CD4-positive, alpha-beta memory T cell (primary cell): ENCODE measurements at regions of chr10 and their contacts with region 1.

Region 1: GRCh38 chr10:3785257-3785850 is 345 bp upstream of the KLF6 start:
- DNase-seq: peak; percentile 99 to 100 (median 100)
- H3K4me3 ChIP-seq: peak overlapping the region; percentile 75 to 95
- H3K4me3 Mint-ChIP-seq: peak overlapping the region; percentile 90 to 99 (median 96)
- H3K27ac ChIP-seq: peak overlapping the region; percentile 97
- H3K27ac Mint-ChIP-seq: peak overlapping the region; percentile 98 to 100 (median 98)
- H3K4me1 ChIP-seq: peaks cover 23% of the 10 kb centered on the region
- H3K4me1 Mint-ChIP-seq: peaks cover 8 to 55% (median 24%) of the 10 kb centered on the region in 4 donors
- H3K27me3 ChIP-seq: no peaks in the 10 kb centered on the region
- H3K27me3 Mint-ChIP-seq: peaks cover 0 to 2% of the 10 kb centered on the region in 2 donors

Region 2: GRCh38 chr10:3472287-3473051 is 312.9 kb before region 1 on chr10:
- CTCF ChIA-PET with region 1: interaction called, 4 read pairs
- POLR2A ChIA-PET with region 1: interaction called, 12 read pairs
- intact Hi-C with region 1: no loop called
- DNase-seq: peak in 3 of 5 donors; percentile 9 to 13 (median 12)
- H3K4me3 ChIP-seq: peak overlapping the region; percentile 10 to 58
- H3K4me3 Mint-ChIP-seq: peak overlapping the region; percentile 86 to 93 (median 90)
- H3K27ac ChIP-seq: peak overlapping the region; percentile 29
- H3K27ac Mint-ChIP-seq: peak overlapping the region; percentile 62 to 94 (median 92)
- H3K4me1 ChIP-seq: peaks cover 40% of the 10 kb centered on the region
- H3K4me1 Mint-ChIP-seq: peaks cover 26 to 54% (median 33%) of the 10 kb centered on the region in 4 donors
- H3K27me3 ChIP-seq: no peaks in the 10 kb centered on the region
- H3K27me3 Mint-ChIP-seq: peaks cover 0 to 2% of the 10 kb centered on the region in 2 donors

Region 3: DNA sequence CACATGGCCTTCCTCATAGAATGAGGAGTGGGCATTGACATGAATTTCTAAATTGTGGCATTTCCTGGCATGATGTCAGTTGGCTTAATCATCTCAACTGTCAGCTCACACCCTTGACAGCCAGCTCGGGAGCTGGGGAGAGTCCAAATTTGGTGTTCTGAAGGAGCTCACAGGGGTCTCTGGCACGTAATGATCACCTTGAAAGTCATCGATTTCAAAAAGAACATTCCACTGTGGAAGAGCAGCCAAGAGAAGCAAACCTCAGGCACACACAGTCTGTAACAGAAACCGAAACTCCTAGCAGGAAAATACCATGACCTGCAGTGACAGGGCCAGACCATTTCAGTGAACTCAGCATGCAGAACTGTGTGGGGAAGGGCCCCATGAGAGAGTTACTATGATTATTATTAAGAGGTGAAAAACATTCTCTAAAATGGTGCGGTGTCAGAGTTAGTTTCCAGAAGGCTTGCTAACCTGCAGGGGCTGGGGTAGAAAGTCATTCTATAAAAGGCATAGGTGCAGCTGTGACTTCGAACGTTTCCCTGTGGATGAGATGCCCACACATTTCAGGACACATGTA is 26.0 kb after region 1 on chr10:
- CTCF ChIA-PET with region 1: interaction called, 39 read pairs
- POLR2A ChIA-PET with region 1: interaction called, 1,468 read pairs
- intact Hi-C with region 1: no loop called
- DNase-seq: peak; percentile 49 to 79 (median 66)
- H3K4me3 ChIP-seq: peak overlapping the region; percentile 1 to 39
- H3K4me3 Mint-ChIP-seq: peak overlapping the region; percentile 76 to 87 (median 82)
- H3K27ac ChIP-seq: peak overlapping the region; percentile 99
- H3K27ac Mint-ChIP-seq: no peak overlapping the region
- H3K4me1 ChIP-seq: peaks cover 79% of the 10 kb centered on the region
- H3K4me1 Mint-ChIP-seq: peaks cover 18 to 89% (median 66%) of the 10 kb centered on the region in 4 donors
- H3K27me3 ChIP-seq: no peaks in the 10 kb centered on the region
- H3K27me3 Mint-ChIP-seq: no peaks in the 10 kb centered on the region

Region 4: DNA sequence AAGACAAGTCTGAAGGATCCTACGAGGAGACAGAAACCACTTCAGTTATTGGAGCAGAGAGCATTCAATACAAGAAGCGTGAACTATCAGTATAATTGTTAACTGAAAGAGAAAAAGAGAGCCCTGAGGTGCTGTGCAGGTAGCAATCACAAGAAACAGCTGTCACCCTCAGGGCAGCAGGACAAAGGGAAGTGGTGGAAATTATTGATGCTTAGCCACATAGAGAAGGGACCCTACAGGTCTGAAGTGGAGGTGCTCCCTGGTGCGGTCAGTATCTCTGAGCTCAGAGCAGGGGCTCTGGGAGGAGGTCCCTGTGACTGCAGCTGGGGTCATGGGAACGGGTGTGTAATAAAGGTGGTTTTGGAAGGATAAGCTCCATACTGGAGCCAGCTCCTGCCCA is 97.5 kb after region 1 on chr10:
- CTCF ChIA-PET with region 1: no interaction called
- POLR2A ChIA-PET with region 1: interaction called, 509 read pairs
- intact Hi-C with region 1: no loop called
- DNase-seq: no peak
- H3K4me3 ChIP-seq: no peak overlapping the region
- H3K4me3 Mint-ChIP-seq: no peak overlapping the region
- H3K27ac ChIP-seq: no peak overlapping the region
- H3K27ac Mint-ChIP-seq: peak overlapping the region in 2 of 7 donors; percentile 30 to 62
- H3K4me1 ChIP-seq: peaks cover 18% of the 10 kb centered on the region
- H3K4me1 Mint-ChIP-seq: peaks cover 22 to 44% (median 28%) of the 10 kb centered on the region in 4 donors
- H3K27me3 ChIP-seq: no peaks in the 10 kb centered on the region
- H3K27me3 Mint-ChIP-seq: no peaks in the 10 kb centered on the region

Region 5: DNA sequence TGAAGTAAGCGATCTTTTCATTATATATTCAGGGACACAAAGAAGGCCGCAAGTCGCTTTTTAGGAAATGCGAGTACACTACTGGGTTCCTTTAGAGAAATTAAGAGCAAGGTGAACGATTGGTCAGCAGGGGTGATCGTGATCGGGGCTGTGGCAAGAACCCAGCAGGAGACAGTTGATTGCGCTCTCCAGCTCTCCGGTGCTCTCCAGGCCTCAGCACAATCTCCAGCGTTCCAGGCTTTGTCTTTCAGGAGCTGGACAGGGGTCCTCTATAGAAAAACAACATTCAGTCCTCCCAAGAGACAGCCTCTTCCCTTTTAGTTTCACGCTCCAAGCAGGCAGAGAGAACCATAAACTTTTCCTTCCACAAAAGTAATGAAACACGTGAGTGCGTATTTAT is 170.1 kb after region 1 on chr10:
- CTCF ChIA-PET with region 1: no interaction called
- POLR2A ChIA-PET with region 1: interaction called, 248 read pairs
- intact Hi-C with region 1: no loop called
- DNase-seq: no peak
- H3K4me3 ChIP-seq: no peak overlapping the region
- H3K4me3 Mint-ChIP-seq: no peak overlapping the region
- H3K27ac ChIP-seq: no peak overlapping the region
- H3K27ac Mint-ChIP-seq: no peak overlapping the region
- H3K4me1 ChIP-seq: peaks cover 20% of the 10 kb centered on the region
- H3K4me1 Mint-ChIP-seq: peaks cover 14 to 33% (median 20%) of the 10 kb centered on the region in 4 donors
- H3K27me3 ChIP-seq: no peaks in the 10 kb centered on the region
- H3K27me3 Mint-ChIP-seq: no peaks in the 10 kb centered on the region

Region 6: DNA sequence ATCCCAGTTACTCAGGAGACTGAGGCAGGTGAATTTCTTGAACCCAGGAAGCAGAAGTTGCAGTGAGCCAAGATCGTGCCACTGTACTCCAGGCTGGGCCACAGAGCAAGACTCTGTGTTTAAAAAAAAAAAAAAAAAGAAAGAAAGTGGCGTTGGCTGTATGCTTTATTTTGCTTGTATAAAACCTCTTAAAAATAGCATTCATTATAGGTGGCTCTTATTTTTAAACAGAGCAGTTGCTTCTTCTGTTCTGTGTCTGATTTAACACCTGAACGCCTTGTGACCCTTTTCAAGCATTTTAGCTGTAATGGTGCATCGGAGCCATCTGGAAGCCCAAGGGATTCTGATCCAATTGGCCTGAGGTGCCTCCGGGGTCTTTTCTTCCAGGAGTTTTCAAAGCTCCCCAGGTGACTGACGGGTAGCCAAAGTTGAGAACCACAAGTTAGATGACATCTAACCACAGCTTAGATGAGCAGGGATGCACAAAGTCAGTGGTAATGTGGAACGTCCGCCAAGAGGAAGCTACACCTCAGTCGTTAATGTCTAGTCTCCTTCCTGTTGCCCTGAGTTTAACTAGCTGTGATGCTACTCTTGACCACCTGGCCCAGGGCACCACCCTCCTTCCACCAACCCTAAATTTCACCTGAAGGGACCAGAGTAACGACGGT is 274.3 kb after region 1 on chr10:
- CTCF ChIA-PET with region 1: no interaction called
- POLR2A ChIA-PET with region 1: interaction called, 31 read pairs
- intact Hi-C with region 1: no loop called
- DNase-seq: peak; percentile 26 to 68 (median 45)
- H3K4me3 ChIP-seq: no peak overlapping the region
- H3K4me3 Mint-ChIP-seq: peak overlapping the region in 7 of 8 donors; percentile 58 to 79 (median 63)
- H3K27ac ChIP-seq: no peak overlapping the region
- H3K27ac Mint-ChIP-seq: peak overlapping the region; percentile 68 to 94 (median 89)
- H3K4me1 ChIP-seq: peaks cover 31% of the 10 kb centered on the region
- H3K4me1 Mint-ChIP-seq: peaks cover 23 to 32% (median 28%) of the 10 kb centered on the region in 4 donors
- H3K27me3 ChIP-seq: no peaks in the 10 kb centered on the region
- H3K27me3 Mint-ChIP-seq: no peaks in the 10 kb centered on the region

Region 7: DNA sequence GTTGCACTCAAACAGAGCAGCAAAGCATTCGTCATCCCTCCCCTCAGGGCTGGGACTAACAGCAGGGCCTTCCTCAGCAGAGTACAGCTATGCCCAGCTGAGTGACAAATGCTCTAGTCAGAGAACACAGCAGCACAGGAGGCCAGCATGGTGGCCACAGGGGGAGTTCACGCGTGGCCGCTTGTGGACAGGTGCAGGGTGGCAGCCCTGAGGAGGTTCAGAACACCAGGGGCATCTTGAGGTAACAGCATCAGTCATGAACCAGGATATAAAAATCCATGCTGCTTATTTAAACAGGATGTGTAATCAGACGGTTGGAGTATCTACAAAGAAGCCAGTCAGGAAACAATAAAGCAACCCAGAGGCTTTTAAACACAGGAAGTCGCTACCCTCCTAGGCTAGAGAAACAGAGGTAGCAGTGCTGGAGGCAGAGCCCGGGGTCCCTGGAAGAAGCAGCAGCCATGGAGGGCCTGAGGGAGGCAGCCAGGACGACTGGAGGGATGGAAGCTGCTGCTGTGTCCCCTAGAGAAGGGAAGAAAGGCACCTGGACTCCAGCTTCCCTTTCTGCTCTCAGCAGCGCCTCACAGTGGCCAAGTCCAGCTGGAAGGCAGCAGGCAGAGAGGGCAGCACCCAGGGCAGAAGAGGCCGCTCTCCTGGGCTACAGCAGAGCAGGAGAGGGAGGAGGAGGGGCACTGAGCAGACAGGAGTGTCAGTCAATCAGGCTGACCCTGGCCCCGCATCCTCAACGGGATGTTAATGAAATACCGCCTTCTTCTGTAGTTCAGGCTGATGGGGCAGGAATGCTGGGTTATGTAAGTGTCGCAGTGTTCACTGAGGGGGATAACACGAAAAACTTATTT is 1508.6 kb after region 1 on chr10:
- CTCF ChIA-PET with region 1: no interaction called
- POLR2A ChIA-PET with region 1: interaction called, 10 read pairs
- intact Hi-C with region 1: no loop called
- DNase-seq: peak; percentile 49 to 78 (median 66)
- H3K4me3 ChIP-seq: peak overlapping the region; percentile 54 to 70
- H3K4me3 Mint-ChIP-seq: peak overlapping the region; percentile 91 to 100 (median 98)
- H3K27ac ChIP-seq: peak overlapping the region; percentile 81
- H3K27ac Mint-ChIP-seq: peak overlapping the region; percentile 96 to 100 (median 98)
- H3K4me1 ChIP-seq: peaks cover 71% of the 10 kb centered on the region
- H3K4me1 Mint-ChIP-seq: peaks cover 53 to 92% (median 79%) of the 10 kb centered on the region in 4 donors
- H3K27me3 ChIP-seq: no peaks in the 10 kb centered on the region
- H3K27me3 Mint-ChIP-seq: no peaks in the 10 kb centered on the region